ENCODE measurements at regions of chr11 and their contacts with region 1.

Region 1: GRCh38 chr11:85627998-85628770 is at the start of gene TMEM126B:
- DNase-seq: peak; percentile 84
- ATAC-seq: peak; percentile 99
- H3K4me3 ChIP-seq: peak within 1 kb of the TSS; percentile 94
- H3K27ac ChIP-seq: peak within 1 kb of the TSS; percentile 55
- H3K4me1 ChIP-seq: peaks cover 8% of the 10 kb centered on the region
- H3K27me3 ChIP-seq: no peaks in the 10 kb centered on the region
- CTCF ChIP-seq: no peak
- EP300 ChIP-seq: no peak
- POLR2A ChIP-seq: peak; percentile 92
- RAD21 ChIP-seq: no peak
- polyA plus RNA-seq, gene TMEM126B: 83.8 to 117 TPM

Region 2: GRCh38 chr11:85114786-85115185 is 513.4 kb before region 1 on chr11:
- CTCF ChIA-PET with region 1: no interaction called
- POLR2A ChIA-PET with region 1: no interaction called
- RAD21 ChIA-PET with region 1: no interaction called
- SMC1A ChIA-PET with region 1: no interaction called
- in situ Hi-C with region 1: no loop called
- intact Hi-C with region 1: loop called (anchors 10 kb)
- DNase-seq: no peak
- ATAC-seq: no peak
- H3K4me3 ChIP-seq: no peak overlapping the region
- H3K27ac ChIP-seq: no peak overlapping the region
- H3K4me1 ChIP-seq: peaks cover 13% of the 10 kb centered on the region
- H3K27me3 ChIP-seq: no peaks in the 10 kb centered on the region
- CTCF ChIP-seq: no peak
- EP300 ChIP-seq: no peak
- POLR2A ChIP-seq: no peak
- RAD21 ChIP-seq: no peak

Region 3: GRCh38 chr11:85582111-85582510 is 46.1 kb before region 1 on chr11:
- CTCF ChIA-PET with region 1: no interaction called
- POLR2A ChIA-PET with region 1: no interaction called
- RAD21 ChIA-PET with region 1: no interaction called
- SMC1A ChIA-PET with region 1: no interaction called
- in situ Hi-C with region 1: no loop called
- intact Hi-C with region 1: no loop called
- DNase-seq: no peak
- ATAC-seq: peak; percentile 68
- H3K4me3 ChIP-seq: no peak overlapping the region
- H3K27ac ChIP-seq: no peak overlapping the region
- H3K4me1 ChIP-seq: no peaks in the 10 kb centered on the region
- H3K27me3 ChIP-seq: no peaks in the 10 kb centered on the region
- CTCF ChIP-seq: no peak
- EP300 ChIP-seq: no peak
- POLR2A ChIP-seq: no peak
- RAD21 ChIP-seq: no peak

Region 4: DNA sequence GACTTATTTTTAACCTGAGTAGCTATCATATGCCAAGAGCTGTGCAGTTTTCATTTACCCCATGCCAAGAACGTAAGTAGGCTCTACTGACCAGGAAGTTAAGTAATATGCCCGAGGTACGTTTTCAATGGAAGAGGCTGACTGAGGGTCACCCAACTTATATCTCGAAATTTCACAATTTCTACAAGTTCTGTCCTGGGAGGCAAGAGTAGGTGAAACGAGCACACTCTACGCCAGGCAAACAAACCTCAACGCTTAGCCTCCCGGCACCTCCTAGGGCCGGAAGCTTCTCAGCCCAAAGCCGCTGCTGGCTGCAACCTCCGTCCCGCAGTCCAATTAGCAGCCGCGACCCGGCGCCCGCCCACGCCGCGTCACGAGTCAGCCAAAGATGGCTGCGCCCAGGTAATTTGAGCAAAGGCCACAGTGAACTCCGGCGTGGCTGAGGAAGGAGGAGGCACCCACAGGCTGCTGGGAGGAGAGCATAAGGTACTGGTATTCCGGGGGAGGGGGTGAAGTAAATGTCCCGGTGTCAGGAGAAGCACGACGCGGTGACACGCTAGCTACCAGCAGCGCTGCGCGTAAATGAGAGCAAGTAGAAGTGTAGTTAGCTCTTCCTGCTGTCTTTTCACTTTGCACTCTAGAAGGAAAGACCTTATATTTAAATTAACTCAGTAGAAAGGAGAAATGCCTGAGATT is 19.6 kb after region 1 on chr11 and contains the start of gene TMEM126A:
- CTCF ChIA-PET with region 1: interaction called, 13 read pairs
- POLR2A ChIA-PET with region 1: interaction called, 35 read pairs
- RAD21 ChIA-PET with region 1: interaction called, 26 read pairs
- SMC1A ChIA-PET with region 1: interaction called, 11 read pairs
- in situ Hi-C with region 1: no loop called
- intact Hi-C with region 1: no loop called
- DNase-seq: peak; percentile 64
- ATAC-seq: peak; percentile 99
- H3K4me3 ChIP-seq: peak within 1 kb of the TSS; percentile 77
- H3K27ac ChIP-seq: peak within 1 kb of the TSS; percentile 85
- H3K4me1 ChIP-seq: no peaks in the 10 kb centered on the region; the same call in 1 of the 2 replicates
- H3K27me3 ChIP-seq: no peaks in the 10 kb centered on the region
- CTCF ChIP-seq: no peak
- EP300 ChIP-seq: no peak
- POLR2A ChIP-seq: peak; percentile 97
- RAD21 ChIP-seq: no peak
- polyA plus RNA-seq, gene TMEM126A: 184 to 208 TPM

Region 5: GRCh38 chr11:85699957-85700741 is 72.0 kb after region 1 on chr11:
- CTCF ChIA-PET with region 1: no interaction called
- POLR2A ChIA-PET with region 1: no interaction called
- RAD21 ChIA-PET with region 1: no interaction called
- SMC1A ChIA-PET with region 1: no interaction called
- in situ Hi-C with region 1: no loop called
- intact Hi-C with region 1: no loop called
- DNase-seq: no peak
- ATAC-seq: peak; percentile 86
- H3K4me3 ChIP-seq: no peak overlapping the region
- H3K27ac ChIP-seq: no peak overlapping the region
- H3K4me1 ChIP-seq: peaks cover 9% of the 10 kb centered on the region
- H3K27me3 ChIP-seq: no peaks in the 10 kb centered on the region
- CTCF ChIP-seq: no peak
- EP300 ChIP-seq: no peak
- POLR2A ChIP-seq: no peak
- RAD21 ChIP-seq: no peak

Region 6: DNA sequence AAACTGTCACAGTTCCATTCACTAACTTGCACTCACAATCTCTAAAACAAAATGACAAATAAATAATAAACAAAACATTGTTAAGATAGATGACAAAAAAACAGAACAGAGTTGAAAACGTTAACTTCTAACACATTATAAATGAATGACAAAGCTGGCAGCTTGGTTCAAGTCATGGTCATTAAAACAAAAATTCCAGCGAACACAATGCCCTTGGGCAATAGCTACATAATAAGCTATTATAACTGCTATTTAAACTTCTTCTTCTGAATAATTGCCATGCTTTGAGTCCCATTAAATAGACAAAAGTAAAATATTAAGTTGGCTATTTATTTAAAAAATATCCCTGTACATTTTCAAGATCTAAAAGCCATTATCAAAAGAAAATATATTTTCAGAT is 386.0 kb after region 1 on chr11:
- CTCF ChIA-PET with region 1: no interaction called
- POLR2A ChIA-PET with region 1: no interaction called
- RAD21 ChIA-PET with region 1: no interaction called
- SMC1A ChIA-PET with region 1: no interaction called
- in situ Hi-C with region 1: no loop called
- intact Hi-C with region 1: no loop called
- DNase-seq: no peak
- ATAC-seq: no peak
- H3K4me3 ChIP-seq: no peak overlapping the region
- H3K27ac ChIP-seq: no peak overlapping the region
- H3K4me1 ChIP-seq: peaks cover 3% of the 10 kb centered on the region; the same call in 1 of the 2 replicates
- H3K27me3 ChIP-seq: no peaks in the 10 kb centered on the region
- CTCF ChIP-seq: no peak
- EP300 ChIP-seq: no peak
- POLR2A ChIP-seq: no peak
- RAD21 ChIP-seq: no peak